Caco-2 (cell line): ENCODE measurements at regions of chr16 and their contacts with region 1.

Region 1: DNA sequence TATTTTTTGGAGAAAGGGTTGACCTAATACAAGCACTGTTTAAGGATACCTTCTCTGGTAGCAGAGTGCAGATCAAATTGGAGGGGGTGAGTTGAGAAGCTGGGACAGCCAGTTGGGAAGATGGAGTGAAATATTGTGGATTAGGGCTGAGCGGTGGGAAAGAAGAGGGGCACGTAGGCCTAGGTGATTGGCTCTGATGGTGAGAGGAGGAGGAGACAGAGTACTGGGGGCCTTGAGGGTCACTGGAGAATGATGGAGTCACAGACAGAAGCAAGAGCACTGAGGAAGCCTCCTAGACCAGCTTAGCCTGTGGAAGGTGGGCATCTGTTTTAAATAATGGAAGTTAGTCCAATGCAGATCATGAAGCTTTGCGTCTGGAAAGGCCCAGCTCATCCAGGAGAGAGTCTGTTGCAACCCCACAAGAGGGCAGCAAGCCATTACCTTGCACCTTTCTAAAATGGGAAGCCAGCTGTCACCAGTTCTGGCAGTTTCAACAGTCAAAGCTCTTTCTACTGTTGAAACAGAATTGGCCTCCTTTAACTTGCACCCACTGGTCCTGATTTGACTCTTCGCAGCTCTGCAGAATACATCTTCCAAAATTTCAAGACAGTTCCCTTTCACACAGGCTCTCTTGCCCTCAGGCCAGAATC is 11.8 kb downstream of the SLC9A5 start:
- DNase-seq: peak; percentile 64 to 72
- H3K4me3 ChIP-seq: no peak overlapping the region
- H3K4me3 Mint-ChIP-seq: no peak overlapping the region
- H3K27ac Mint-ChIP-seq: no peak overlapping the region
- H3K4me1 ChIP-seq: no peaks in the 10 kb centered on the region; the same call in 1 of the 2 replicates
- H3K4me1 Mint-ChIP-seq: no peaks in the 10 kb centered on the region
- H3K27me3 ChIP-seq: no peaks in the 10 kb centered on the region
- H3K27me3 Mint-ChIP-seq: no peaks in the 10 kb centered on the region
- CTCF ChIP-seq: peak; percentile 67 to 84

Region 2: DNA sequence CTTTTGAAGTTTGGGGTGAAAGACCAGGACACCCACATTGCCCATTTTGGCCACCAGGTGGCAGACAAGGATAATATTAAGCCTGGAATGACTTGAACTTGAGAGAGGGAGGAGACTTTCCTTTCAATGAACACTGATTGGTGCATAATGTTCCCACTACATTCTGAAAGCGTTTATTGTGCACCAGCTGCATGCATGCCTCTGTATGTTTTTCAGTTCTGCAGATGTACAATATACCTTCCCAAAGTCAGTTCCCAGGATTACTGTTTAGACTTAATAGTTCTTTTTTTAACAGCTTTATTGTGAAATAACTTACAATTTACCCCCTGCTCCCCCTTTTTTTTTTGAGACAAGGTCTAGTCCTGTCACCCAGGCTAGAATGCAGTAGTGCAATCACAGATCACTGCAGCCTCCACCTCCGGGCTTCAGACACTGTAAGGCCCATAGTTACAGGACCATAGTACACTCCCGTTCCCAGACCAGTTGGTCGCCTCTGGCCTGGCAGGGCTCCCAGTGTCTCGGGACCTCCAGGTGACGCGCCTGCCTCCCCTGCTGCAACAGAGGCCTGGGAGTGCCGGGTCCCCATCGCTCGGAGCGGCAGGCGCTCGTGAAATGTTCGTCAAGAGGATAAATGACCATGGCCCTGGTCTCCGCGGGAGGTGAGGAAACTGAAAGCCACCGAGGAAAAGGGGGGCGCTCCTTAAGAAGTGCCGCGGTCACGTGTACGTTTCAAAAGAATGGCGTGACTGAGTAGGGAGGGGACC is 313.1 kb before region 1 on chr16:
- CTCF ChIA-PET with region 1: no interaction called
- POLR2A ChIA-PET with region 1: no interaction called
- intact Hi-C with region 1: no loop called
- DNase-seq: peak; percentile 81 to 87
- H3K4me3 ChIP-seq: no peak overlapping the region
- H3K4me3 Mint-ChIP-seq: peak overlapping the region; percentile 40
- H3K27ac Mint-ChIP-seq: peak overlapping the region; percentile 48
- H3K4me1 ChIP-seq: no peaks in the 10 kb centered on the region
- H3K4me1 Mint-ChIP-seq: no peaks in the 10 kb centered on the region
- H3K27me3 ChIP-seq: no peaks in the 10 kb centered on the region
- H3K27me3 Mint-ChIP-seq: no peaks in the 10 kb centered on the region
- CTCF ChIP-seq: peak; percentile 82 to 87

Region 3: DNA sequence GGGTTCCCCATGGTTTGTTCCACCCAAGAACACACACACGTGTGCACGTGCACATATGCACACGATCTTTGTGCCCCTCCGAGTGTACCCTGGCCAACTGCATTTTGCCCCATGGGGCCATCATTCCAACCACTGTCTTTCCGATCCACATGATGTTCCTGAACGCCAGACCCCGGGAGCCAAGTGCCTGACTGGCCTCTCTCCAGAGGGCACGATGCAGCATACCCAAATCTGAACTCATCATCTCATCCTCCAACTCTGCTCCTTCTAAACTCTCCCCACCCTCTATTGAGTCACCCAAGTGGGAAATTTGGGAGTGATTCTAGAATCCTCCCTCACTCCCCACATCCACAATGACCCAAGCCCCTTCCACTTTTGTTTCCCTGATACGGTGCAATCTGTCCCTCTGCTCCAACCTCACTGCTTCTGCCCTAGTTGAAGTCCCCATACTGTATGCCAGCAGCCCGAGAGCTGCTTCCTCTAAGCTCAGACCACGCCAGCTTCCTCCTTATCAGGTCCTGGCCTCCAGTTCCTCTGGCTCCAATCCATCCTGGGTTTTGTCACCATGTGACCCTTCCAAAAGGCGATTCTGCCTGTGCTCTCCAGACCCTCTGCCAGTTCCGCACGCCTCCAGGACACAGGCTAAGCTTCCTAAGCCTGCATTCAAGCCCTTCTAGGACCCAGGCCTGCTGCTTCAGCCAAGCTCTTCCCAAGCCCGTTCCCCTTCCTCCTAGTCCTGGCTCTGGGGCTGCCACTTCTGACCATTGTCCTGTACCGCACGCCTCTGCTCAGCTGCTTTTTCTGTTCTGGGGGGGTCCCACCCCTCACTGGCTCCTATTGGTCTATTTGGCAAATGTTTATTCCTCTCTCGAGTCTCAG is 43.7 kb before region 1 on chr16:
- CTCF ChIA-PET with region 1: no interaction called
- POLR2A ChIA-PET with region 1: no interaction called
- intact Hi-C with region 1: no loop called
- DNase-seq: no peak
- H3K4me3 ChIP-seq: no peak overlapping the region
- H3K4me3 Mint-ChIP-seq: no peak overlapping the region
- H3K27ac Mint-ChIP-seq: no peak overlapping the region
- H3K4me1 ChIP-seq: peaks cover 15% of the 10 kb centered on the region; the same call in 1 of the 2 replicates
- H3K4me1 Mint-ChIP-seq: peaks cover 14% of the 10 kb centered on the region
- H3K27me3 ChIP-seq: no peaks in the 10 kb centered on the region
- H3K27me3 Mint-ChIP-seq: peaks cover 4% of the 10 kb centered on the region
- CTCF ChIP-seq: no peak

Region 4: DNA sequence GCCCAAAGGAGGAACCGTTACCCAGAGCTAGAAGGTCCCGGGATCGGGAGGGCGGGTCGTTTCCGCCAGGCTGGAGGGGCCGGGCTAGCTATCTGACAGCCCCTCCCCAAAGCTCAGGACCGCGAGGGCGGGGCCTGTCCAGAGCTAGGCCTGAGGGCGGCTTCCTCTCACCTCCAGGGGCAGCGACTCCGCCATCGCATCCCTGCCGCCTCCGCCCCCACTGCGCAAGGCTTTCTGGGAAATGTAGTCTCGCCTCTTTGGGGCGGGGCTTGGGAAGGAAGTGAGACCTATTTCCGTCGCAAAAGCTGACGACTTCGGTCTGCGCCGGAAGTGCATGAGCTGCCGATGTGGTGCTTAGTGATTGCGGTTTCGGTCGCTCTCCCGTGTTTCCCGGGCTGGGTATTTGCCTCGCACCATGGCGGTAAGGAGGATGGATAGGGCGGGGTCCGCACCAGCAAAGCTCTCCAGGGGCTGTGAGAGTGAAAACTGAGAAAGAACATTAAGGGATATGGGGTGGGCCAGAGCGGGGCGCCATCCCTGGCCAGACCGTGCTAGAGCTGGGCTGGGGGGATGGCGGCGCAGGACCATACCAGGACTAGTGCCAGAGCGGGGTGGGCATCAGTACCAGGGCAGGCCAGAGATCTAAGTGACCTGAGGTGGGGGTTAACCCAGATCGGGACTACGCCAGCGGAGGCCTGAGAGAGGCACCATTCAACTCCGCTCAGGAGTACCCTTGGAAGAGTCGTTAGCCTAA is 33.6 kb before region 1 on chr16 and contains the start of gene TMEM208:
- CTCF ChIA-PET with region 1: interaction called, 13 read pairs
- POLR2A ChIA-PET with region 1: no interaction called
- intact Hi-C with region 1: no loop called
- DNase-seq: peak; percentile 100
- H3K4me3 ChIP-seq: peak within 1 kb of the TSS; percentile 96
- H3K4me3 Mint-ChIP-seq: peak within 1 kb of the TSS; percentile 98
- H3K27ac Mint-ChIP-seq: peak within 1 kb of the TSS; percentile 98
- H3K4me1 ChIP-seq: peaks cover 7% of the 10 kb centered on the region; the same call in 1 of the 2 replicates
- H3K4me1 Mint-ChIP-seq: peaks cover 20% of the 10 kb centered on the region
- H3K27me3 ChIP-seq: no peaks in the 10 kb centered on the region
- H3K27me3 Mint-ChIP-seq: no peaks in the 10 kb centered on the region
- CTCF ChIP-seq: peak in 1 of 2 experiments; percentile 28
- total RNA-seq, gene TMEM208: 63.8 and 69.7 TPM in 2 replicates

Region 5: GRCh38 chr16:67246934-67247697 is 13.4 kb before region 1 on chr16 and contains the start of gene FHOD1:
- CTCF ChIA-PET with region 1: interaction called, 51 read pairs
- POLR2A ChIA-PET with region 1: interaction called, 24 read pairs
- intact Hi-C with region 1: no loop called
- DNase-seq: peak; percentile 98 to 99
- H3K4me3 ChIP-seq: peak within 1 kb of the TSS; percentile 72
- H3K4me3 Mint-ChIP-seq: peak within 1 kb of the TSS; percentile 95
- H3K27ac Mint-ChIP-seq: peak within 1 kb of the TSS; percentile 87
- H3K4me1 ChIP-seq: peaks cover 27% of the 10 kb centered on the region
- H3K4me1 Mint-ChIP-seq: peaks cover 42% of the 10 kb centered on the region
- H3K27me3 ChIP-seq: peaks cover 6% of the 10 kb centered on the region
- H3K27me3 Mint-ChIP-seq: peaks cover 18% of the 10 kb centered on the region
- CTCF ChIP-seq: peak in 1 of 2 experiments; percentile 36
- total RNA-seq, gene FHOD1: 59.1 and 69.0 TPM in 2 replicates

Region 6: DNA sequence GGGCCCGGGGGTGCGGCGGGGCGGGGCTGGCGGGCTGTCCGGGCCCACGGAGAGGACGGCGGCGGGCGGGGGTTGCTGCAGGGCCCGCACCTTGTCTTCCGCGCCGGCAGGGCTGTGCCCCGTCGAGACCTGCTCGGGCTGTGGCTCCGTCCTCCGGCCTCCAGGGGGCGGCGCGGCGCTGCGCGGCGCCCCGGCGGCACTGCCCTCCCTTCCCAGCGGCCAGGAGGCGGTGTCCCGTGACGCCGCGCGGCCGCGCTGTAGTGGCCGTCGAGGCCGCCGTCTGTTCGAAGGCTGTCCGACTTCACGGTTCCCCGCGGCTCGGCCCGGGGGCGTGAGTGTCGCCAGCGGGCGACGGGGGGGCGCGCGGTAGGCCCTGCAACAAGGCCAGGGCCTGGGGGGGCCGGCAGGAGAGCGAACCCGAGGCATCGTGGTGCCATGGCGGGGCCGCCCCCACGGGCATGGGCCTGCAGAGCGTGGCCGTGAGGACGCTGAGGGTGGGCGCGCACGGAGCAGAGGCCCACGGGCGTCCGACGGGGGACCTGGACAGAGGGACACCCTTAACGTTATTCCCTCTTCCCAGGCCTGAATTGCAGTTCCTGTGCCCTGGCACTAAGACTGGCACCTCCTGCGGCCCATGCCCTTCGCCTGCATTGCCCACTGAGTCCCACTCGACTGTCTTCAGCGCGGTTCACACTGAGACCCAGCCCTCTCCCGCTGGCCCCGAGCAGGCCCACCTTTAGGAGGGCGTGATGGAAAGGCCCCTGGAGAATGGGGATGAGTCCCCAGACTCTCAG is 18.9 kb after region 1 on chr16 and contains the start of gene PLEKHG4:
- CTCF ChIA-PET with region 1: interaction called, 11 read pairs
- POLR2A ChIA-PET with region 1: interaction called, 5 read pairs
- intact Hi-C with region 1: loop called (anchors 2 kb)
- DNase-seq: peak; percentile 85 to 93
- H3K4me3 ChIP-seq: peak within 1 kb of the TSS; percentile 88
- H3K4me3 Mint-ChIP-seq: peak within 1 kb of the TSS; percentile 84
- H3K27ac Mint-ChIP-seq: peak within 1 kb of the TSS; percentile 66
- H3K4me1 ChIP-seq: peaks cover 20% of the 10 kb centered on the region
- H3K4me1 Mint-ChIP-seq: peaks cover 7% of the 10 kb centered on the region
- H3K27me3 ChIP-seq: no peaks in the 10 kb centered on the region
- H3K27me3 Mint-ChIP-seq: no peaks in the 10 kb centered on the region
- CTCF ChIP-seq: peak; percentile 63 to 94
- total RNA-seq, gene PLEKHG4: 91.0 and 96.4 TPM in 2 replicates

Region 7: DNA sequence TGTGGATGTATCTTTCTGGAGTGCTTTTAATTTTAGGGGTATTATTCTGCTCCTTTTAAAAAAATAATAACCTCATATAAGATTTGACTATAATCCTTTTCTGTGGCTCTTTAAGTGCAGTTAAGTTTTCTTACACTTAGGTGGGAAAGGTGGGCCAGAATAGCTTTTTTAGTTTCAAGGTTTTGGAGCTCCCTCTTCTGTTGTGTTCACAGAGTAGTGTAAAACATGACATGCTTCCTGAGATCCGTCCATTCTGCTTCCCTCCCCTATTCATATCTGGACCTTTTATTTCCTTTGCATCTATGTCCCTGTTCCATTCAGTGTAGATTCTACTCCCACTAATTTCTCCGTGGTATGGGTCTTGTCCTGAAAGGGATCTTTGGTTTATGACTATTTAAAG is 78.9 kb after region 1 on chr16:
- CTCF ChIA-PET with region 1: interaction called, 69 read pairs
- POLR2A ChIA-PET with region 1: no interaction called
- intact Hi-C with region 1: loop called (anchors 1 kb)
- DNase-seq: peak in 1 of 2 experiments; percentile 38
- H3K4me3 ChIP-seq: no peak overlapping the region
- H3K4me3 Mint-ChIP-seq: no peak overlapping the region
- H3K27ac Mint-ChIP-seq: no peak overlapping the region
- H3K4me1 ChIP-seq: no peaks in the 10 kb centered on the region
- H3K4me1 Mint-ChIP-seq: no peaks in the 10 kb centered on the region
- H3K27me3 ChIP-seq: no peaks in the 10 kb centered on the region
- H3K27me3 Mint-ChIP-seq: no peaks in the 10 kb centered on the region
- CTCF ChIP-seq: peak; percentile 30 to 58

Region 8: DNA sequence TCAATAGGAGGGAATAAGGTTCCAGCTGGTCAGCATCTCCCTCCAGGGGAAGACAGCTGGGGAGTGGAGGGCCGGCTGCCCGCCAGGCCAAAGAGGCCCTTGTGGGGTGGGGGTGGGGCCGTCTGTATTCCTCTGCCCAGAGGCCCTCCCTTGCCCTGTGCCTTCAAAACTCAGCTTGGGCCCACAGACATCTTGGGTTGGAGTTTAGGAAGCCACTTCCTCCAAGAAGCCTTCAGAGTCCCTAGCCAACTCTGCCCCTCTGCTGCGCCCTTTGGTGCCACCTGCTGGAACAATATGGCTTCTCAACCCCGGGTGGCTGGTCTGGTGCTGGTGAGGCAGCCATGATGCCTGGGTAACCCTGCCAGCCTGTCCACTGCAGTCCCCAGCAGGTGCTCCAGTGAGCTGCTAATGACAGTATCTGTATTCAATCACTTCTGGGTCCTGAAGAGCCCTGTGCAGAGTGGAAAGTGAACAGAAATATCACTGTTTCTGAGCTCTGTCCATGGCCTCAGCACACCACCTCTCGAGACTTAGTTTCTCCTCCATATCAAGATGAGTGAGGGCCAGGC is 187.0 kb after region 1 on chr16:
- CTCF ChIA-PET with region 1: interaction called, 9 read pairs
- POLR2A ChIA-PET with region 1: no interaction called
- intact Hi-C with region 1: loop called (anchors 1 kb)
- DNase-seq: peak; percentile 70 to 74
- H3K4me3 ChIP-seq: no peak overlapping the region
- H3K4me3 Mint-ChIP-seq: no peak overlapping the region
- H3K27ac Mint-ChIP-seq: no peak overlapping the region
- H3K4me1 ChIP-seq: no peaks in the 10 kb centered on the region
- H3K4me1 Mint-ChIP-seq: no peaks in the 10 kb centered on the region
- H3K27me3 ChIP-seq: no peaks in the 10 kb centered on the region
- H3K27me3 Mint-ChIP-seq: no peaks in the 10 kb centered on the region
- CTCF ChIP-seq: peak; percentile 64 to 69

Region 9: DNA sequence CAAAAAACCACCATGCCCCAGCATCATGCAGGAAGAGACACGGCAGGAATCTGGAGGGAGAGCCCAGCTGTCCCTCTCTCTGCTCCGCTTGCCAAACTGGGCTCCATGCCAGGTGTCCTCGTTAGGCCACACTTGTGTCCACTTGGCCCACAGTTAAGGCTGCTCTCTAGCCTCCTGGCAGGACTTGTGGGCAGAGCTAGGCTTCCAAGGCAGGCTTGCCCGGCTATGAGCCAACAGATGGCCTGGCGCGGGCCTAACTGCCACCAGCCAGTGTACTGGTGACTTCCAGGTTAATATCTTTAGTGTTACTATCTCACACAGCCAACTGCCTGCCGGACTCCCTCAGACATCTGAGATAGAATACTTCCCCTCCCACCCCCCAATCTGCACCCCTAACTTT is 209.8 kb after region 1 on chr16:
- CTCF ChIA-PET with region 1: interaction called, 12 read pairs
- POLR2A ChIA-PET with region 1: no interaction called
- intact Hi-C with region 1: loop called (anchors 1 kb)
- DNase-seq: no peak
- H3K4me3 ChIP-seq: no peak overlapping the region
- H3K4me3 Mint-ChIP-seq: no peak overlapping the region
- H3K27ac Mint-ChIP-seq: no peak overlapping the region
- H3K4me1 ChIP-seq: no peaks in the 10 kb centered on the region
- H3K4me1 Mint-ChIP-seq: no peaks in the 10 kb centered on the region
- H3K27me3 ChIP-seq: no peaks in the 10 kb centered on the region
- H3K27me3 Mint-ChIP-seq: no peaks in the 10 kb centered on the region
- CTCF ChIP-seq: no peak